ENCODE measurements at regions of chr6 and their contacts with region 1.

Region 1: DNA sequence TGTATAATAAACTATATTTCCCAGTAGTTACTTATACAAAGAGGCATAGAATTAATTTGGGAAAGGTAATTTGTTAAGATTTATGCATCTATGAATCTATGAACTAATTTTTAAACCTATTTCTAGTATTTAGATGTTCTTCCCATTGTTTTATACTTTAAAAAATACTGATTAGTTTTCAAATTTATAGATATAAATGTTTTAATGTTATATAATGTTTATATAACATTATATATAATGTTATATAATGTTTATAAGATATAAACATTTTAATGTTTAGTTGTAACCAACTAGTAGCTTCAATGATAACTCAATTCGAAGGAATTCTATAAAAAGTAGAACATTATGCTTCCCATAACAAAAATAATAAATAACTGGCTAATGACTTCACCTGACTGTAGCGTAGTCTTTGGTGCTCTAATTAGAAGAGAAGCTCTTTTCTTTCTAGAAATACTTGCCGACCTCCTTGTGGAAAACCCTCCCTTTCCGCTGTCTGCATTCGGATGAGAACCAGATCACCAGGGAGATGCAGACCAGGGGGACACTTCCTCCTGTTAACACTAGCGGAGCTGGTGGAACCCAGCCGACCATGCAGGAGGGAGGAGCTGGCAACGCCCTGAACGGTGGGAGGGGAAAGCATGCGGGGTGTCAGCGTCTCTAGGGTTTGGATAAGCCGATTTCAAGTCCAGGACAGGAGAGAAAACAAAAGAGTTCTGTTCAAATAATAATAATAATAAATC is 158.4 kb downstream of the OR2B2 start:
- DNase-seq: peak; percentile 88
- ATAC-seq: peak; percentile 70
- H3K4me3 Mint-ChIP-seq: peak overlapping the region; percentile 82
- H3K27ac Mint-ChIP-seq: peak overlapping the region; percentile 86
- H3K4me1 Mint-ChIP-seq: peaks cover 35% of the 10 kb centered on the region
- H3K27me3 Mint-ChIP-seq: no peaks in the 10 kb centered on the region
- CTCF ChIP-seq: no peak

Region 2: DNA sequence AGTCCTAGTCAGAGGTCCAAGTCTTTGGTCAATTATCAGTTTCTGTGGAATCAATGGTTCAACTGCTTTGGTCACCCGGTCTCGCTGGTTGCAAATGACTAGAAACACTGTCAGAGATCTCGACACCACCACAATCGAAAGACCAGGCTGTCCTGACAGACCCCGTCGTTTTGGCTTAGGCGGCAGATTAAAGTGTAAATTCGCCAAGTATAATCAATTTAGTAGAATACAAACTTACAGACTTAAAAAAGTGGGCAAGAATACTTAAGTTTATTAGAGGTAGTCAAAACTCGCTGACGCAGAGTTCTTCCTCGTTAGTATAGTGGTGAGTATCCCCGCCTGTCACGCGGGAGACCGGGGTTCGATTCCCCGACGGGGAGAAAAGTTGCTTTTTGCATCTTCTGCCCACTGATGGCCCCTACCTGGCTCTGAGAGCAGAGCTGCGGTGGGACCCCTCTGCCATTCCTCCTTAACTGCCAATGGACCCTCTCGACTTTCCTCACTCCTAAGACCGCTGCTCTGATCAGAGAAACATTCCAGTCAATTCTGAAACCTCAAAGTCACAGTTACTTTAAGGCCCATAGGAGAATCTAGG is 250.3 kb before region 1 on chr6:
- CTCF ChIA-PET with region 1: interaction called, 5 read pairs
- POLR2A ChIA-PET with region 1: no interaction called
- intact Hi-C with region 1: loop called (anchors 5 kb)
- DNase-seq: peak; percentile 87
- ATAC-seq: peak; percentile 54
- H3K4me3 Mint-ChIP-seq: peak overlapping the region; percentile 89
- H3K27ac Mint-ChIP-seq: peak overlapping the region; percentile 91
- H3K4me1 Mint-ChIP-seq: peaks cover 34% of the 10 kb centered on the region
- H3K27me3 Mint-ChIP-seq: peaks cover 10% of the 10 kb centered on the region
- CTCF ChIP-seq: no peak

Region 3: DNA sequence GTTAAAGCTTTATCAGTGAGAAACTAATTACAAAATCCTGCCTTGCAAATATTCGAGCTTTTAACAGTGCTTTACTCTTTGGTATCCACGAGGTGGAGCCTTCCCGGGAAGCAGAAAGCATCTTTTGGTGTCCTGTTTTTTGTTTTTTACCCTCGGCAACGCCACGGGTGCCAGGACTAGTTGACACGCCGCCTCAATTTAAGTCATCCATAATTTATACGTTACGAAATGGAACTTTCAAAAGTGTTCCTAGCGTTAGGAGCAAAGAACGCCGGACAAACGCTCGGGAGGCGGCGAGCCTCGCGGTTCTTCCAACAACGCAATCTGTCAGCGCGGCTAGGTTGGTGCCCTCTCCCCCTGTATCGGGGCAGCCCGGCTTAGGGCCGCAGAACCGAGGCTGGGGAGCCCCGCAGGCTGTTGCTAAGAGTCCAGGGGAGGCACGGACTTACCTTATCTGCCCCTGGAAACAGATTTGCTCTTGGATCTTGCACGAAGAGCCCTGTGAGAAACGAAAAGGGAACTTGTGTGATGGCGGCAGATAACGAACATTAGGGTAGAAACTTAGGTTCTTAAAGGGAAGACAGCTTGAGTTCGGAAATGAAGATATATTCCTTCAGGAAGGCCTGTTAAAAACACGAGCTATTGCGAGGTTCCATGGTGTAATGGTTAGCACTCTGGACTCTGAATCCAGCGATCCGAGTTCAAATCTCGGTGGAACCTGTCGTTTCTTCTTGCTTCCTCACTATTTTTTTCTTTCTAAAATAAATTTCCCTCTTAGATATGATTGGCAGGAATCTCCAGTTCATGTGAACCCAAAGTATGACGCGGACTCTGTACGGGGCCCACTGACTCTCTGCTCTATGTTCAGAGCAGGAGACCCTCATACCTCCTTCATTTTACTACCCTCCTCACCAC is 234.7 kb before region 1 on chr6:
- CTCF ChIA-PET with region 1: interaction called, 14 read pairs
- POLR2A ChIA-PET with region 1: no interaction called
- intact Hi-C with region 1: loop called (anchors 2 kb)
- DNase-seq: peak; percentile 80
- ATAC-seq: peak; percentile 77
- H3K4me3 Mint-ChIP-seq: peak overlapping the region; percentile 87
- H3K27ac Mint-ChIP-seq: peak overlapping the region; percentile 87
- H3K4me1 Mint-ChIP-seq: peaks cover 19% of the 10 kb centered on the region
- H3K27me3 Mint-ChIP-seq: peaks cover 20% of the 10 kb centered on the region
- CTCF ChIP-seq: peak; percentile 88

Region 4: GRCh38 chr6:27650620-27651370 is 103.0 kb before region 1 on chr6:
- CTCF ChIA-PET with region 1: no interaction called
- POLR2A ChIA-PET with region 1: no interaction called
- intact Hi-C with region 1: no loop called
- DNase-seq: peak; percentile 85
- ATAC-seq: peak; percentile 94
- H3K4me3 Mint-ChIP-seq: no peak overlapping the region
- H3K27ac Mint-ChIP-seq: no peak overlapping the region
- H3K4me1 Mint-ChIP-seq: peaks cover 4% of the 10 kb centered on the region
- H3K27me3 Mint-ChIP-seq: peaks cover 49% of the 10 kb centered on the region
- CTCF ChIP-seq: peak; percentile 65

Region 5: DNA sequence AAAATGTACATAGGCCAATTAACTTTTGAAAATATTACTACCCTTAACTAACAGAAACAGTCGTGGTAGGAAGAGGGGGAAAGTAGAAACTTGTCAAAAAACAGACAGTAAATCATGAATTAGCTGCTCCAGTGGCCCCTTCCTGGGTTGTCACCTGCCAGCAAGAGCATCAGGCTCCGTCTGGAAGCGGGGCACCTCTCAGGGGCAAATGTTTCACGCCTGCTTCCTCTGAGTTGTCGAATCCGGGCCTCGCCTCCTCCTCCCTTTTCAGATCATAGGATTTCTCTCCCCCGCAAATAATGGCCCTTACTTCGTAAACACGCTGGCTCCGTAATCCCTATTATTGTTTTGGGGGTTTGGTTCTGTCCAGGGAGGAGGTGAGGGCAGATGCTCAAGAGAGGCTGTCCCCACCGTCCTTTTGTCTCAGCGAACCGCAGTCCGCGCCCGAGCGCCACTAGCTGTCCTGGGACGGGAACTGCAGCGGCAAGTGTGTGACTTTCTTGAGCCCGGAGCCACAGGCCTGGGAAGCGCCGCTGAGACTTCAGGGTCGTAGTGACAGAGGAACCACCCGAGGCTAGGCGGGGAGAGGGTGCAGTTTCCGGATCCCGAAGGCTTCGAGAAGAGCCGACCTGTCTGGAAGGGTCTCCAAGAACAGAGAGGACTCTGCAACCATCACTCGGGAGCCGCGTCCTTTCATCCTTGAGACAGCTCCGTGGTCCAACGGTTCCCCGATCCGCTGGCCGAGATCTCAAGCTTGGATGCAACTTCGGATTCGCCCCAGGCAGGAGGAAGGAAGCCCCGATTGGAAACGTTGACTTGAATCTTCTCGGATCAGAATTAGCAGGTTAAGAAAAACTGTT is 66.5 kb before region 1 on chr6:
- CTCF ChIA-PET with region 1: interaction called, 17 read pairs
- POLR2A ChIA-PET with region 1: no interaction called
- intact Hi-C with region 1: loop called (anchors 5 kb)
- DNase-seq: peak; percentile 91
- ATAC-seq: peak; percentile 81
- H3K4me3 Mint-ChIP-seq: peak overlapping the region; percentile 78
- H3K27ac Mint-ChIP-seq: peak overlapping the region; percentile 88
- H3K4me1 Mint-ChIP-seq: peaks cover 10% of the 10 kb centered on the region
- H3K27me3 Mint-ChIP-seq: peaks cover 8% of the 10 kb centered on the region
- CTCF ChIP-seq: peak; percentile 70

Region 6: GRCh38 chr6:27694545-27694870 is 59.3 kb before region 1 on chr6:
- CTCF ChIA-PET with region 1: interaction called, 7 read pairs
- POLR2A ChIA-PET with region 1: no interaction called
- intact Hi-C with region 1: loop called (anchors 5 kb)
- DNase-seq: no peak
- ATAC-seq: no peak
- H3K4me3 Mint-ChIP-seq: peak overlapping the region; percentile 87
- H3K27ac Mint-ChIP-seq: peak overlapping the region; percentile 74
- H3K4me1 Mint-ChIP-seq: peaks cover 15% of the 10 kb centered on the region
- H3K27me3 Mint-ChIP-seq: no peaks in the 10 kb centered on the region
- CTCF ChIP-seq: no peak

Region 7: DNA sequence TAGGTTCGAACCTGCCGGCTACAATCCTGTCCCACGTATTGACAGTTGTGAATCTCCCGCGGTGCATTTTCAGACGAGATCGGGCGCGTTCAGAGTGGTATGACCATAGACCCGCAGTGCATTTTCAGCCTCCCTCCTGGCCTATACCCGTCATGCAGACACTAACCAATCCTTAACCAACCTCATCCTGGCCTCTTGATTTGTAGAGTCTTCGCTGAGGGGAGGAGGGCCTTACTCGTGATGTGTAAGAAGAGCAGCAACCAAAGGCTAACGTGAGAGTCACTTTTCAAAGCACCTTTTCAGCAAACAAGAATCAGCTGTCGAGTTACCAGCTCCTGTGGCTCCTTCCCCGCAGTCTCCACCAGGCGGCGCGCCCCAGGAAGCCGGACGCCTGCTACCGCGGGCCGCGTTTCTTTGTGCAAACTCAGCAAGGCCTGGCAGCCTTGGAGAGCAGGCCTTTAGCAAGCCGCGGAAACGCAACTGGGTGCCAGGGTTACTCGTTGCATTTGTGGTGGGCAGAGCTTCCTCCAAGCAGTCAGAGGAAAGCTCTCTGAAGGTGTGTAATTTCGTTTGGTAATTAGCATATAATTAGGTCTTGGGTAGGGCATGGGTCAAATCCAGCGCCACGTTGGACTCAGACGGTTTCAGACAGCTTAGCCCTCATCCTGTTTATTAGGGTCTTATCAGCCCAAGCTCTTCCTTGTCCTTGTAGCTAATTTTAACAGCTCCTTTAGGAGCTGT is 18.6 kb after region 1 on chr6:
- CTCF ChIA-PET with region 1: interaction called, 29 read pairs
- POLR2A ChIA-PET with region 1: interaction called, 5 read pairs
- intact Hi-C with region 1: no loop called
- DNase-seq: peak; percentile 93
- ATAC-seq: peak; percentile 99
- H3K4me3 Mint-ChIP-seq: peak overlapping the region; percentile 29
- H3K27ac Mint-ChIP-seq: no peak overlapping the region
- H3K4me1 Mint-ChIP-seq: peaks cover 13% of the 10 kb centered on the region
- H3K27me3 Mint-ChIP-seq: peaks cover 14% of the 10 kb centered on the region
- CTCF ChIP-seq: peak; percentile 79

Region 8: GRCh38 chr6:27795697-27796494 is 42.1 kb after region 1 on chr6:
- CTCF ChIA-PET with region 1: interaction called, 22 read pairs
- POLR2A ChIA-PET with region 1: no interaction called
- intact Hi-C with region 1: no loop called
- DNase-seq: peak; percentile 68
- ATAC-seq: peak; percentile 69
- H3K4me3 Mint-ChIP-seq: no peak overlapping the region
- H3K27ac Mint-ChIP-seq: no peak overlapping the region
- H3K4me1 Mint-ChIP-seq: peaks cover 30% of the 10 kb centered on the region
- H3K27me3 Mint-ChIP-seq: peaks cover 10% of the 10 kb centered on the region
- CTCF ChIP-seq: peak; percentile 72

Region 9: GRCh38 chr6:27861276-27861840 is 107.5 kb after region 1 on chr6:
- CTCF ChIA-PET with region 1: no interaction called
- POLR2A ChIA-PET with region 1: no interaction called
- intact Hi-C with region 1: no loop called
- DNase-seq: no peak
- ATAC-seq: no peak
- H3K4me3 Mint-ChIP-seq: no peak overlapping the region
- H3K27ac Mint-ChIP-seq: no peak overlapping the region
- H3K4me1 Mint-ChIP-seq: peaks cover 17% of the 10 kb centered on the region
- H3K27me3 Mint-ChIP-seq: no peaks in the 10 kb centered on the region
- CTCF ChIP-seq: no peak